Heart left ventricle (tissue), 16 donors: ENCODE measurements at regions of chr4 and their contacts with region 1.

Region 1: DNA sequence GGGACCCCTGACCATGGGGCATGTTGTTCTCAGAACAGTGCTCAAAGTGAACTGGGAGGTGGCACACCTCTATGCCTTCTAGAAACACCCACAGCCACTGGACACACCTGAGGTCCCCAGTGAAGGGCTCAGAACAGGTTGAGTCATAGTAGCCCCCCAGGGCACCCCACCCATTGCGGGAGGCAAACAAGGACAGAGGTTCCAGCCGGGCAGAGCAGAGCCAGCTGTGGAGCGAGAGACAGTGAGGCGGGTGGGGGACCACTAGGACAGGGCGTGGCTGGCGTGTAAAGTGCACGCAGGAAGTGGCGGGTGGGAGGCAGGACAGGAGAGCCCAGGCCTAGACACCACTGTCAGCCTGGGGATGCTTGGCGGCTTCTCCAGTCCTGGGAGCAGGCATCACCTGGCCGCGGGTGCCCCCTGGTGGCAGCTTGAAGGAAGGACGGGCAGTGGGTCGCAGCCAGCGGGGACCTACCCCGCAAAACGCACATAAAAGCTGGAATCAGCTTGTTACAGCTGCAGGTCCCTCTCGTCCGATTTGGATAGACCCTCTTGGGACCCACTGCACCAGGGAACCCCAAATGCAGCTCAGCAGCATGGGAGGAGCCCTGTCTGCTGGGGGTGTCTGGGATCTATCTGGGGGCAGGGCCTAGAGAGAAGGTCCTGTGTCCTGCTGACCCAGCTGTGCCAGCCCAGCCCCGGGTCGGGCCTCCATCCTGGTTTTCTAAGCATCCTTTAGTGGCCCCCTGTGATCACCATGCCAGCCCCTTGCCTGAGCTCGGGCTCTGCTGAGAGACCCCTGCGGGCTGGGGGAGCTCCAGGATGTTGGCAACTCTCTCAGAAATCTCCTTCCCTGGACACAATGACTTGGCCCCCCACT is 57.6 kb downstream of the WFS1 start:
- DNase-seq: peak; percentile 79 to 91 (median 80)
- ATAC-seq: peak; percentile 51 to 74 (median 66)
- H3K4me3 ChIP-seq: no peak overlapping the region
- H3K27ac ChIP-seq: no peak overlapping the region
- H3K4me1 ChIP-seq: peaks cover 0 to 10% (median 1%) of the 10 kb centered on the region in 12 donors
- H3K27me3 ChIP-seq: peaks cover 0 to 13% (median 0%) of the 10 kb centered on the region in 9 donors
- CTCF ChIP-seq: peak; percentile 84 to 99 (median 96)
- POLR2A ChIP-seq: no peak

Region 2: DNA sequence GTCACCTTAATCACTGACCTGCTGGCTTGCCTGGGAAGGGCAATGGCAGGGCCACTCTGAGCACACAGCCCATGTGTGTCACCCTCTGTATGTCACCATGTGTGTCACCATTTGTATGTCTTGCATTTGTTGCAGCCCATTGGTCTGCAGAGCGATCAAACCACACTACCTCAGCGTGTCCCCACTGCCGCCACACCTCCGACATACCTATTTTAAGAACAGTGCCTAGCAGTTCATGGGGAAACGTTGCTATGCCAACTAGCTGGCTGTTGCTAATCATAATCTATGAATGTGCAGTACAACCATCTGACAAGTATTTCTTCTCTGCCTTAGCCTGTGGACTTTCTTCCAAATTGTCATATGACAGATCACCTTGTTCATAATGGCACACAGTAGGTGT is 426.4 kb before region 1 on chr4:
- intact Hi-C with region 1: no loop called
- DNase-seq: no peak
- ATAC-seq: peak in 2 of 4 donors; percentile 18 to 61
- H3K4me3 ChIP-seq: no peak overlapping the region
- H3K27ac ChIP-seq: no peak overlapping the region
- H3K4me1 ChIP-seq: no peaks in the 10 kb centered on the region
- H3K27me3 ChIP-seq: peaks cover 0 to 86% (median 24%) of the 10 kb centered on the region in 9 donors
- CTCF ChIP-seq: no peak
- POLR2A ChIP-seq: no peak

Region 3: GRCh38 chr4:5998333-5998936 is 328.8 kb before region 1 on chr4:
- intact Hi-C with region 1: loop called in 4 of 10 experiments (anchors 1 to 5 kb)
- DNase-seq: peak in 4 of 5 donors; percentile 33 to 50 (median 44)
- ATAC-seq: peak in 3 of 4 donors; percentile 69 to 79 (median 75)
- H3K4me3 ChIP-seq: no peak overlapping the region
- H3K27ac ChIP-seq: no peak overlapping the region
- H3K4me1 ChIP-seq: no peaks in the 10 kb centered on the region
- H3K27me3 ChIP-seq: peaks cover 0 to 41% (median 0%) of the 10 kb centered on the region in 9 donors
- CTCF ChIP-seq: peak; percentile 69 to 91 (median 88)
- POLR2A ChIP-seq: no peak

Region 4: GRCh38 chr4:6250235-6250983 is 76.9 kb before region 1 on chr4:
- intact Hi-C with region 1: loop called in 9 of 10 experiments (anchors 1 to 5 kb)
- DNase-seq: peak in 1 of 5 donors; percentile 13
- ATAC-seq: peak in 2 of 4 donors; percentile 29 to 36
- H3K4me3 ChIP-seq: no peak overlapping the region
- H3K27ac ChIP-seq: no peak overlapping the region
- H3K4me1 ChIP-seq: peaks cover 0 to 5% (median 0%) of the 10 kb centered on the region in 12 donors
- H3K27me3 ChIP-seq: peaks cover 0 to 46% (median 15%) of the 10 kb centered on the region in 9 donors
- CTCF ChIP-seq: peak; percentile 75 to 90 (median 86)
- POLR2A ChIP-seq: no peak

Region 5: GRCh38 chr4:6264225-6264540 is 63.1 kb before region 1 on chr4:
- intact Hi-C with region 1: loop called in 8 of 10 experiments (anchors 1 to 2 kb)
- DNase-seq: peak in 3 of 5 donors; percentile 52 to 63 (median 53)
- ATAC-seq: peak in 3 of 4 donors; percentile 79 to 85 (median 80)
- H3K4me3 ChIP-seq: no peak overlapping the region
- H3K27ac ChIP-seq: no peak overlapping the region
- H3K4me1 ChIP-seq: peaks cover 0 to 9% (median 3%) of the 10 kb centered on the region in 12 donors
- H3K27me3 ChIP-seq: peaks cover 0 to 7% (median 0%) of the 10 kb centered on the region in 9 donors
- CTCF ChIP-seq: peak; percentile 31 to 75 (median 64)
- POLR2A ChIP-seq: no peak

Region 6: DNA sequence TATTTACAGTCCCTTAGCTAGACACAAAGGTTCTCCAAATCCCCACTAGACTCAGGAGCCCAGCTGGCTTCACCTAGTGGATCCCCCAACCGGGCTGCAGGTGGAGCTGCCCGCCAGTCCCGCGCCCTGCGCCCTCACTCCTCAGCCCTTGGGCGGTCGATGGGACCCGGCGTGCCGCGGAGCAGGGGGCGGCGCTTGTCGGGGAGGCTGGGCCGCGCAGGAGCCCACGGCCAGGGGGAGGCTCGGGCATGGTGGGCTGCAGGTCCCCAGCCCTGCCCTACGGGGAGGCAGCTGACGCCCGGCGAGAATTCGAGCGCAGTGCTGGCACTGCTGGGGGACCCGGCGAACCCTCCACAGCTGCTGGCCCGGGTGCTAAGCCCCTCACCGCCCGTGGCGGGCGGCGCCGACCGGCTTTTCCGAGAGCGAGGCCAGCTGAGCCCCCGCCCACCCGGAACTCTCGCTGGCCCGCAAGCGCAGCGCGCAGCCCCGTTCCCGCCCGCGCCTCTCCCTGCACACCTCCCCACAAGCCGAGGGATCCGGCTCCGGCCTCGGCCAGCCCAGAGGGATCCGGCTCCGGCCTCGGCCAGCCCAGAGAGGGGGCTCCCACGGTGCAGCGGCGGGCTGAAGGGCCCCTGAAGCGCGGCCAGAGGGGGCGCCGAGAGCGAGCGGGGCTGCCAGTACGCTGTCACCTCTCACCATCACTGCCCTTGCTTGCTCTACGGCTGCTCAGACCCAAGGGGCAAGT is 18.2 kb before region 1 on chr4:
- intact Hi-C with region 1: loop called in 1 of 10 experiments (anchors 2 kb)
- DNase-seq: peak in 3 of 5 donors; percentile 45 to 77 (median 49)
- ATAC-seq: peak in 3 of 4 donors; percentile 63 to 77 (median 73)
- H3K4me3 ChIP-seq: peak overlapping the region; percentile 24 to 79 (median 61)
- H3K27ac ChIP-seq: peak overlapping the region in 9 of 12 donors; percentile 24 to 70 (median 42)
- H3K4me1 ChIP-seq: peaks cover 0 to 14% (median 4%) of the 10 kb centered on the region in 12 donors
- H3K27me3 ChIP-seq: peaks cover 0 to 18% (median 0%) of the 10 kb centered on the region in 9 donors
- CTCF ChIP-seq: peak in 5 of 12 donors; percentile 7 to 32 (median 21)
- POLR2A ChIP-seq: no peak

Region 7: GRCh38 chr4:6402566-6403398 is 75.5 kb after region 1 on chr4:
- intact Hi-C with region 1: no loop called
- DNase-seq: peak in 2 of 5 donors; percentile 7 to 34
- ATAC-seq: peak in 3 of 4 donors; percentile 26 to 55 (median 36)
- H3K4me3 ChIP-seq: no peak overlapping the region
- H3K27ac ChIP-seq: no peak overlapping the region
- H3K4me1 ChIP-seq: no peaks in the 10 kb centered on the region
- H3K27me3 ChIP-seq: peaks cover 9 to 64% (median 30%) of the 10 kb centered on the region in 9 donors
- CTCF ChIP-seq: no peak
- POLR2A ChIP-seq: no peak

Region 8: DNA sequence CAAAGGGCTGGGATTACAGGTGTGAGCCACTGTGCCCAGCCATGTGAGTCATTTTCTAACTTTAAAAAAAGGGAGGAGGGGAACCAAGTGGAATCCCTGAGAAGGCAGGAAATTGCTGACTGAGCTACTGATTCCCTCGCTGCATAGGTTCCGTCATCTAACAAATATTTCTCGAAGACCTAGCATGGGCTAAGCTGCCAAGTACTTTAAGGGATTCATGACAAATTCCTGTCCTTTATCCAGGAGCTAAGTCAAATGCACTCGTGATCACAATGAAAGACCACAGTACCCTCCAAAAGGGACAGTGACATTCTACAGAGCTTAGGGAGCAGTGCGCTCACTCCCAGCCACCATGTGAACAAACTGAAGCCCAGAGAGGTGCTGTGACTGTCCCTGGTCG is 214.5 kb after region 1 on chr4:
- intact Hi-C with region 1: loop called in 7 of 10 experiments (anchors 2 to 5 kb)
- DNase-seq: no peak
- ATAC-seq: no peak
- H3K4me3 ChIP-seq: no peak overlapping the region
- H3K27ac ChIP-seq: no peak overlapping the region
- H3K4me1 ChIP-seq: no peaks in the 10 kb centered on the region
- H3K27me3 ChIP-seq: peaks cover 0 to 39% (median 7%) of the 10 kb centered on the region in 9 donors
- CTCF ChIP-seq: no peak
- POLR2A ChIP-seq: no peak

Region 9: GRCh38 chr4:6546681-6547447 is 219.6 kb after region 1 on chr4:
- intact Hi-C with region 1: loop called in 7 of 10 experiments (anchors 2 to 5 kb)
- DNase-seq: peak in 3 of 5 donors; percentile 18 to 40 (median 31)
- ATAC-seq: peak in 1 of 4 donors; percentile 37
- H3K4me3 ChIP-seq: no peak overlapping the region
- H3K27ac ChIP-seq: no peak overlapping the region
- H3K4me1 ChIP-seq: peaks cover 0 to 16% (median 0%) of the 10 kb centered on the region in 12 donors
- H3K27me3 ChIP-seq: peaks cover 0 to 14% (median 0%) of the 10 kb centered on the region in 9 donors
- CTCF ChIP-seq: peak; percentile 70 to 86 (median 78)
- POLR2A ChIP-seq: no peak